Caki2 (cell line): ENCODE measurements at regions of chr15 and their contacts with region 1.

Region 1: GRCh38 chr15:99125061-99125891 is 20.4 kb downstream of the SYNM start:
- DNase-seq: no peak

Region 2: GRCh38 chr15:99213187-99213811 is 88.0 kb after region 1 on chr15:
- in situ Hi-C with region 1: loop called (anchors 5 kb)
- DNase-seq: peak; percentile 54

Region 3: DNA sequence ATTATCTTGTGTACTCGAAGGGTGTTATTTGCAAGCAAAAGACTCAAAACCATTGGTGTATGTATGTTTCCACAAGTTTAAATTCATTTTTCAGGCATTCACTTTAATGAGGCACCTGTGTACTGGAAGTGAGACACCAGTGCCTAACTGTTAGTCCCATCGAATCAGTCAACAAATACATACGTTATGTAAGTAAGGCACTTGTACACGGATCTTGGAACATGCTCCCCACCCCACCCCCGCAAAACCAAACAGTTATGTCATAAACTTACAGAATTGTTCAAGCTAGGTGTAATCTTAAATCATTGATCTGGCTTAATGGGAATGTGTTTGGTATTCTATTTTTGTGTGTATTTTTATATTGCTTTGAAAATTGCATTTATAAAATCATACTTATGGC is 143.2 kb after region 1 on chr15:
- in situ Hi-C with region 1: no loop called
- DNase-seq: no peak